ENCODE measurements at regions of chr5 and their contacts with region 1.

Region 1: GRCh38 chr5:139164020-139164419 is 34.1 kb downstream of the SIL1 start:
- DNase-seq: peak; percentile 31 to 60 (median 58)
- H3K4me3 ChIP-seq: no peak overlapping the region
- H3K27ac ChIP-seq: no peak overlapping the region
- H3K4me1 ChIP-seq: peaks cover 0 to 32% (median 15%) of the 10 kb centered on the region in 4 experiments
- H3K27me3 ChIP-seq: no peaks in the 10 kb centered on the region

Region 2: DNA sequence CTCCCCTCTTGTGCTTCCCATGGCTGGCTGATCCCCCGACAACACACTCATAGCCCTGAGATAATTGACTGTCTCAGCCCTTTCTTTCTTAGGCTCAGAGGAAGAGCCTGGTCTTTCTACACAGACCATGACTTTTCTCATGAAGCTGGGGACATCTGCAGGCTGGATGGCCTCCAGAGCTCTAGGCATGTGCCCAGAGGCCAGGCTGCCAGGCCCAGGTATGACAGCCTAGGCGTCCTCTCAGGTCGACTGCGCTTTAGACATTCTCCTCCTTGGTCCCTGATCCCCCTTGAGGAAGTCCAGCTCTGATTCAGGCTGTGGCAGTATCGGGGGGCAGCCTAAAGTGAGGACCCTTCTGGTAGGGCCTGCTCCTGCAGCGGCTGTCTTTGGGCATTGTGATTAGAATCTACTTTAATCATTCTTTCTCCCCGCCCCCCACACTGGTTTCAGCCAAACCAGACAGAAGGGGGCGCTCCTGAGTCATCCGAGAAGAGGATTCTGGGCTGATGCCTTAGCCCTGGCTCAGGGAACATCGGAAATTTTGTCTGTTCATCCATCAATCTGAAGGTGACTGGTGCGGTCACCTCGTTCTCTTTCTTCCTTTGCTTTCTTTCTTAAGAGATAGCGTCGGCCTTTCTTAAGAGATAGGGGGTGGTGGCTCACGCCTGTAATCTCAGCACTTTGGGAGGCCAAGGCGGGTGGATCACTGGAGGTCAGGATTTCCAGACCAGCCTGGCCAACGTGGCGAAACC is 522.3 kb before region 1 on chr5:
- CTCF ChIA-PET with region 1: no interaction called
- POLR2A ChIA-PET with region 1: no interaction called
- DNase-seq: peak; percentile 70 to 83 (median 78)
- H3K4me3 ChIP-seq: no peak overlapping the region
- H3K27ac ChIP-seq: no peak overlapping the region
- H3K4me1 ChIP-seq: peaks cover 0 to 6% (median 5%) of the 10 kb centered on the region in 4 experiments
- H3K27me3 ChIP-seq: peaks cover 0 to 19% (median 8%) of the 10 kb centered on the region in 5 experiments

Region 3: GRCh38 chr5:139147483-139148087 is 16.4 kb before region 1 on chr5:
- CTCF ChIA-PET with region 1: interaction called, 61 read pairs
- POLR2A ChIA-PET with region 1: no interaction called
- DNase-seq: no peak
- H3K4me3 ChIP-seq: peak overlapping the region in 2 of 7 experiments; percentile 1 to 6
- H3K27ac ChIP-seq: peak overlapping the region; percentile 30 to 38
- H3K4me1 ChIP-seq: peaks cover 30 to 58% (median 52%) of the 10 kb centered on the region in 4 experiments
- H3K27me3 ChIP-seq: no peaks in the 10 kb centered on the region